ENCODE measurements at regions of chr9 and their contacts with region 1.

Region 1: DNA sequence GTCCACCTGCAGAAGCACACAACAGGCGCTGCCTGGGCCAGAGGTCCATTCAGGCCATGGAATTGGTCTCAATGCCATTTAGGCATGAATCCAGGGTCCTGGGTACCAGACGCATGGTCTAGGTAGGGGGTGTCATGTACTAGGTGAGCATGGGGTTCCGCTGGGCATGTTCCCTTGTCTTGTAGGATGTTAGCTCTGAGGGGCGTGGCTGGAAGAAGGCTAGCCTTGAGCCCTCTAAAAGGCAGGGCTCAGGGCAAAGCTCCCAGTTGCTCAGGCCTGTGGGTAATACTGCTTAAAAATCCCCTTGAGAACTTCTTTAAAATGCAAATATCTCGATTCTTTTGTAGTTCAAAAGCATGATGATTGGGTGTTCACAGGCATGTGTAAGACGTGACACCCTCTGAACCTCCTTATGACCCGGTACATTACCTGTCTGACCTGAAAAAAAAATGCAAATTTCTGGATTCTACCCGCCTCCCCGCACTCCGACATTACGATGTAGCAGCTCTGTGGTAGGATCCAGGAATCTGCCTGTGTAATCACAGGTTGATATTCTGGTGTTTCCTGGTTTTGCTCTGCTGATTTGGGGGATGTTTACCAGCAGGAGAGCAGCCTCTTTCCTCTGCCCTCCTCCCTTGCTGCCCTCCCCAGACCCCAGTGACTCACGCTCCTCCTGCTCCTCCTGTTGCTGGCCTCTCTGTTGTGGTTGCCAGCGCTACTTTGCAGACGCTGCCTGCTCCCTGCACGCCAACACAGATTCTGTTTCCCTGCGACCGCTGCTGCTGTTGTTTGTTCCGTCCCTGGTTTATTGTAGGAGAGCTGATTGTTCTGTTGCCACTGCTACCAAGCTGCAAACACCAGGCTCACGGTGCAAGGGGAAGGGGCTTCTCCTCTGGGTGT is 5.7 kb downstream of the TMC1 start:
- DNase-seq: peak; percentile 85 to 92 (median 85)
- H3K4me3 ChIP-seq: peak overlapping the region; percentile 29 to 69 (median 41)
- H3K4me3 Mint-ChIP-seq: peak overlapping the region; percentile 70 to 97
- H3K27ac ChIP-seq: peak overlapping the region; percentile 81 to 95
- H3K27ac Mint-ChIP-seq: peak overlapping the region; percentile 90 to 98 (median 93)
- H3K4me1 ChIP-seq: peaks cover 29 to 33% of the 10 kb centered on the region in 2 donors
- H3K4me1 Mint-ChIP-seq: peaks cover 32% of the 10 kb centered on the region
- H3K27me3 ChIP-seq: no peaks in the 10 kb centered on the region
- H3K27me3 Mint-ChIP-seq: peaks cover 0 to 2% (median 0%) of the 10 kb centered on the region in 3 donors
- CTCF ChIP-seq: no peak

Region 2: DNA sequence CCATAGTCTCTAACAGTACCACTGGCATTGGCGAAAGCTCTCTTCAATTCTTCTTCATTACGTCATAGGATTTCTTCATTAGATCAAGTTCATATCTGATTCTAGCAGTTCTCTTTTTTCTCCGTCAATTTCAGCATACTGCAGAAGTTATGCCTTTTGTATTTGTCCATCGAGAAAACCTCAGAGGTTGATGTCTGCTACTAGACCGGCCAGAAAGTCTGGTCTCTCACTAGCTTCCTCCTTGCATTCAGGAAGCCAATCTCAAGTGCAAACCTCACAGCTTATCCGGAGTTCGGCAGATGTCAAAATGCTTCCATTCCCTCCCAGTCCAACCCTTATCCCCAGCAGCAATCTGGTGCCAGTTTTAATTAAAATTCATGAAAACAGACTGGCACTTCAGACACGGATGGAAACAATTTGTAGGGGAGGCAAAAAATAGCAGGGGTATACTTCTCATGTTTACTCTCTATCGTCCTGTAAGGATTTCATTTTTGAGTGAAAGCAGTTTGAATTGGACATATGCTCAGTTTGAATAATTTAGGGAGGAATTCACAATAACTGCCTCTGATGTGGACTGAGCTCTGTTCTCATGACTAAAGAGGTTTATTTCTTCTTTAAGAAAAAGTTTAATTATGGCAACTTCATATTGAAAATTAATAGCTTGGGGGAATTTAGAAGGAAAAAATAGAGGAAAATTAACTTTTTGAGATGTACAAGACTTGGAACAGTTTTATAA is 62.1 kb before region 1 on chr9:
- intact Hi-C with region 1: loop called in 1 of 2 experiments (anchors 1 kb)
- DNase-seq: peak; percentile 77 to 88 (median 79)
- H3K4me3 ChIP-seq: peak overlapping the region in 2 of 3 experiments; percentile 40 to 41
- H3K4me3 Mint-ChIP-seq: peak overlapping the region; percentile 60 to 79
- H3K27ac ChIP-seq: peak overlapping the region; percentile 59 to 82
- H3K27ac Mint-ChIP-seq: peak overlapping the region; percentile 82 to 93 (median 90)
- H3K4me1 ChIP-seq: peaks cover 14 to 20% of the 10 kb centered on the region in 2 donors
- H3K4me1 Mint-ChIP-seq: peaks cover 18% of the 10 kb centered on the region
- H3K27me3 ChIP-seq: no peaks in the 10 kb centered on the region
- H3K27me3 Mint-ChIP-seq: peaks cover 0 to 2% (median 1%) of the 10 kb centered on the region in 3 donors
- CTCF ChIP-seq: no peak

Region 3: DNA sequence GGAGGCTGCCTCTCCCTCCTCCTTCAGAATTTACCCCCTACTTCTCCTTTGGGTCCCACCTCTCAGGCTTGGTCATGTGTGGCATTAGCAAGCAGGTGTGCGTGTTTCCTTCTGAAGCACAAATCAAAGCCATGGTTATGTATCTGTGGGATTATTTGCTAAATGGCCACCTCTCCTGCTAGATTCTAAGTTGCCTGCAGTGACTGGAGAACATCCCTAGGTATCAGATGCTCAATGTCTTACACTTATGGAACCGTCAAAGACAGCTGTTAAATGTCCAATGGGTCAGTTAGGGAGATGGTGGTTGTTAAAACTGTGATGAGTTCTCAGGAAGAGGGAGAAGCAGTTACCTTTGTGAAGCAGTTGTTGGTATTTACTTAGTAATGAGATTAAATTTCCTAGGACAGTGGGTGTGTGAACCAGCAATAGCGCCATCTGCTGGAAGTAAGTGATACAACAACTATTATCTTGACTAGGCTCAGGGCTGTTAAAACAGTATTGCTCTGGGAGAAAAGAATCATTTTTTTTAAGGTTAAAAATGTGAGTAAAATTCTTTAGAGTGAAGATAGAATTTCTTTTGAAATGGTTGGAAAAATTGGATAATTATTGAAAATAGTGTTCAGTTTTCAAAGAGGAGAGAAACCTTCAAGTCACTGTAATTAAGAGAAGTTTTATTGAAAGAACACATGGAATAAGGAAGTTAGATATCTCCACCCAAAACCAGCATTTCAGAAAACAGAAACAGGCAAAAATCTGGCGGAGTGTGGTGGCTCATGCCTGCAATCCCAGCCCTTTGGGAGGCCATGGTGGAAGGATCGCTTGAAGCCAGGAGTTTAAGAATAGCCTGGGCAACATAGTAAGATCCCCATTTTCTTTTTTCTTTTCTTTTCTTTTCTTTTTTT is 65.6 kb after region 1 on chr9:
- intact Hi-C with region 1: loop called (anchors 5 kb)
- DNase-seq: peak; percentile 60 to 74 (median 73)
- H3K4me3 ChIP-seq: peak overlapping the region in 1 of 3 experiments; percentile 5
- H3K4me3 Mint-ChIP-seq: peak overlapping the region in 1 of 2 donors; percentile 66
- H3K27ac ChIP-seq: peak overlapping the region; percentile 51 to 71
- H3K27ac Mint-ChIP-seq: peak overlapping the region; percentile 85 to 96 (median 92)
- H3K4me1 ChIP-seq: peaks cover 72 to 77% of the 10 kb centered on the region in 2 donors
- H3K4me1 Mint-ChIP-seq: peaks cover 71% of the 10 kb centered on the region
- H3K27me3 ChIP-seq: no peaks in the 10 kb centered on the region
- H3K27me3 Mint-ChIP-seq: peaks cover 0 to 4% (median 2%) of the 10 kb centered on the region in 3 donors
- CTCF ChIP-seq: peak; percentile 98

Measured in CD14-positive monocyte (primary cell).